Heart left ventricle (tissue), 16 donors: ENCODE measurements at regions of chr17 and their contacts with region 1.

Region 1: DNA sequence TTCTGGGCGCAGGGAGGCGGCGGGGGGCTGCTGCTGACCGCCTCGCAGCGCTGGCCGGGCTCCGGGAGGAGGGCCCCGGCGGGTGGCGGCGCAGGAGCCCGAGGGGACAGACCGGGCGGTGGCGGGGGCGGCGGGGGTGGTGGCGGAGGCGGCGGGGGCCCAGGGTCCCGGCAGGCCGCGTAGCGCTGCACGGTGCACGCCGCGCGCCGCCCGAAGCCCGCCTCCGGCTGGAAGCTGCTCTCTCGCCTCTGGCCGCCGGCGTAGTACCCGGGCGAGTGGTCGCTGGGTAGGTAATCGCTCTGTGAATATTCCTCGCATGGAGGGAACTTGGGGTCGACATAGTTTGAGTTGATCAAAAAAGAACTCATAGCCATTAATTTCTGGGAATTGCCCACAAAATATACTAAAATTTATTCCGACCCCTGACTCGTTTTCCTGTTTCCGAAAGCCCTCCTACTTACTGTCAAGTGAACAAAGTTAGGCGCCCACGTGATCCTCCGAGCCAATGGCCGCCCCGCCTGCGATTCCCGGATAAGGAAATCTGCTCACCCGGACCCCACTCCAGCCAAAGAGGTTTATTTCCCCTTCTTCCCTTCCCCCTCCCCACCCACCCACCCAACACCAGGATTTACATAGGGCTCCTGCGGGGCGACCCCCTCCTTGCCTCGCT is at the start of gene HOXB4:
- DNase-seq: peak; percentile 53 to 85 (median 70)
- ATAC-seq: peak in 3 of 4 donors; percentile 58 to 68 (median 61)
- H3K4me3 ChIP-seq: peak within 1 kb of the TSS; percentile 3 to 61 (median 50)
- H3K27ac ChIP-seq: peak within 1 kb of the TSS in 11 of 12 donors; percentile 9 to 97 (median 65)
- H3K4me1 ChIP-seq: peaks cover 0 to 39% (median 5%) of the 10 kb centered on the region in 12 donors
- H3K27me3 ChIP-seq: peaks cover 66 to 100% (median 94%) of the 10 kb centered on the region in 9 donors
- CTCF ChIP-seq: no peak
- POLR2A ChIP-seq: no peak
- total RNA-seq, gene HOXB4: 0.27 to 2.8 (median 0.66) TPM in 8 of 9 donors, not detected in the other

Region 2: GRCh38 chr17:48543107-48543853 is 34.8 kb before region 1 on chr17:
- intact Hi-C with region 1: loop called in 3 of 10 experiments (anchors 5 kb)
- DNase-seq: peak in 3 of 5 donors; percentile 43 to 73 (median 43)
- ATAC-seq: peak in 3 of 4 donors; percentile 39 to 40 (median 39)
- H3K4me3 ChIP-seq: peak overlapping the region; percentile 35 to 95 (median 67)
- H3K27ac ChIP-seq: peak overlapping the region; percentile 43 to 94 (median 88)
- H3K4me1 ChIP-seq: peaks cover 0 to 42% (median 15%) of the 10 kb centered on the region in 12 donors
- H3K27me3 ChIP-seq: peaks cover 0 to 95% (median 52%) of the 10 kb centered on the region in 9 donors
- CTCF ChIP-seq: peak in 3 of 12 donors; percentile 9 to 30 (median 11)
- POLR2A ChIP-seq: no peak

Region 3: DNA sequence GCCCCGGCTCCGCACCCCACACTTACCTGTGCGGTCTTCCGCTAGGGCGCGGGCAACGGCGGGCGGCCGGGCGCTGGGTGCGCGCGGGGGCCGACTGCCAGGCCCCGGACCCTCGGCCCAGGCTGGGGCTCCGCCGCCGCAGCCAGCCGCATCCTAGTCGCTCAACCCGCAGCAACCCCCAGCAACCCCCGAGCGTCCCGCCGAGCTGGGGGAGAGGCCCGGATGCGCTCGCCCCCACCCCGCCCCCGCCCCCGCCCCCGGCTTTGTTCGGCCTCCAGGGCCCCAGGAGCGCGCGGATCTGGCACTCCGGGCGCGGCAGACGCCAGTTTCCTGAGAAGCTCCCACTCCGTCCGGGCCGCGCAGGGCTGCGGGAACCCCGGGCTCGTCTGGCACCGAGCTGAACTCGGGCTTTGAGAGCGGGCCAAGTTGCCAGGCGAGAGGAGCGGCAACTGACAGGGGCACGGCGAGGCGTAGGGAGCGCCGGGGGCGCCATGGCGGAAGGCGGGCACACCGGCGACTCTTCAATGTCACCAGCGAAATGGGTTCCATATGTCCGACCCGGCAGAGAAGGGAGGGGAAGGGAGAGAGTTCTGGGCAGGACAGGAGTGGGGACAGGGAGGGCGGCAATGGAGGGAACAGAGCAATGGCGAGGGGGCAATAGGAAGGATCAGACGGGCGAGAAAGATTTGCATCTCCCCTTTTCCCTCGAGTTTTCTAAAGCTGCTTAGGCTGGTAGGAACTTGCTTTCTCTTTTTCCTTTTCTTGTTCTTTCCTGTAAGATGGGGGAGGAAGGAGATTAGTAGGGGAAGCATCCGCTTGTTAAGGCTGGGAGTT is 13.7 kb before region 1 on chr17:
- intact Hi-C with region 1: loop called in 1 of 10 experiments (anchors 2 kb)
- DNase-seq: peak in 1 of 5 donors; percentile 68
- ATAC-seq: peak in 2 of 4 donors; percentile 33 to 56
- H3K4me3 ChIP-seq: peak overlapping the region; percentile 14 to 56 (median 48)
- H3K27ac ChIP-seq: peak overlapping the region in 9 of 12 donors; percentile 4 to 97 (median 59)
- H3K4me1 ChIP-seq: peaks cover 0 to 44% (median 0%) of the 10 kb centered on the region in 12 donors
- H3K27me3 ChIP-seq: peaks cover 14 to 96% (median 72%) of the 10 kb centered on the region in 9 donors
- CTCF ChIP-seq: no peak
- POLR2A ChIP-seq: no peak